CD8-positive, alpha-beta memory T cell (primary cell): ENCODE measurements at regions of chr14 and their contacts with region 1.

Region 1: DNA sequence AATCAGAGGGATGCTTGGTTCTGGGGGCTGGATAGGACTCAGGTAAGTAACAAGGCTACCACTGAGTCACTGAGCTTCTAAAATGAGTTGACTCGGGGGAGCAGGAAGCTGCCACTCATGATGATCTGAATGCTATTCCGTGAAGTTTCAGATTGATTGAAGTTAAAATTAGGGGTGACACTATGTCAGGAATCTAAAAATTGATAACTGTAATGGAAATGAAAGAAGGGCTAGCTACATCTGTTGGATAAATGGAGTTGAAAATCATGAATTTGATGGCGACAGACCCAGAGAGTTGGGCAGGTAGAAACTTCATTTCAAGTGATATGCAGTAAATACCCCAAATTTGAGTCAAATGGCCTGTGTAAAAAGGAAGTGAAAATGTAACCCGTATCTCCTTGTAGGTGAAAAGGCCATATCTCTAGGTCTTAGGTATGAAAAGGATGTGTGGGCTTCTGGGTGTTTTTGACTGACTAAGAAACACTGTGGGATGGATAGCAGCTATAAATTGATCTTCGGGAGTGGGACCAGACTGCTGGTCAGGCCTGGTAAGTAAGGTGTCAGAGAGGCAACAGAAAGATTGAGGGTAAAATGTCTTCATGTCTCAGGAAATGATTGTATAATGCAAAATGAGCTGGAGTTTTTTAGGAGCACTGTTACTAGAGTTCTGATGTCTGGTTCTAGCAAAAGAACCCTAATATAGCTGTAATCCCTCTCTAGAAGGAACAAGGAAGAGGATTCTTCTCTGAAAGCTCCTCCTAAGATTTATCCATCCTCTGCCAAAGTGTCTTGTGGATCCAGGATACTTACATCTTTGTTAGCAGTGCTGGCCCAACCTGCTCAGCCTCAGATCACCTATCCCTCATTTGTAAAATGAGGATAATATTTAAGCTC is 57.3 kb downstream of the DAD1 start:
- DNase-seq: peak in 1 of 5 donors; percentile 59
- H3K4me3 ChIP-seq: peak overlapping the region; percentile 61
- H3K4me3 Mint-ChIP-seq: peak overlapping the region; percentile 81 to 93 (median 83)
- H3K27ac ChIP-seq: peak overlapping the region; percentile 45
- H3K27ac Mint-ChIP-seq: peak overlapping the region; percentile 89 to 99 (median 96)
- H3K4me1 ChIP-seq: peaks cover 93% of the 10 kb centered on the region
- H3K4me1 Mint-ChIP-seq: peaks cover 92 to 98% (median 98%) of the 10 kb centered on the region in 3 donors
- H3K27me3 ChIP-seq: no peaks in the 10 kb centered on the region
- H3K27me3 Mint-ChIP-seq: no peaks in the 10 kb centered on the region

Region 2: GRCh38 chr14:22505697-22506377 is 25.9 kb before region 1 on chr14:
- CTCF ChIA-PET with region 1: interaction called, 18 read pairs
- POLR2A ChIA-PET with region 1: interaction called, 6 read pairs
- DNase-seq: no peak
- H3K4me3 ChIP-seq: peak overlapping the region; percentile 65
- H3K4me3 Mint-ChIP-seq: peak overlapping the region; percentile 89 to 98 (median 91)
- H3K27ac ChIP-seq: peak overlapping the region; percentile 14
- H3K27ac Mint-ChIP-seq: peak overlapping the region; percentile 92 to 100 (median 96)
- H3K4me1 ChIP-seq: peaks cover 48% of the 10 kb centered on the region
- H3K4me1 Mint-ChIP-seq: peaks cover 55 to 66% (median 62%) of the 10 kb centered on the region in 3 donors
- H3K27me3 ChIP-seq: no peaks in the 10 kb centered on the region
- H3K27me3 Mint-ChIP-seq: peaks cover 0 to 1% of the 10 kb centered on the region in 2 donors